ENCODE measurements at regions of chr21 and their contacts with region 1.

Region 1: DNA sequence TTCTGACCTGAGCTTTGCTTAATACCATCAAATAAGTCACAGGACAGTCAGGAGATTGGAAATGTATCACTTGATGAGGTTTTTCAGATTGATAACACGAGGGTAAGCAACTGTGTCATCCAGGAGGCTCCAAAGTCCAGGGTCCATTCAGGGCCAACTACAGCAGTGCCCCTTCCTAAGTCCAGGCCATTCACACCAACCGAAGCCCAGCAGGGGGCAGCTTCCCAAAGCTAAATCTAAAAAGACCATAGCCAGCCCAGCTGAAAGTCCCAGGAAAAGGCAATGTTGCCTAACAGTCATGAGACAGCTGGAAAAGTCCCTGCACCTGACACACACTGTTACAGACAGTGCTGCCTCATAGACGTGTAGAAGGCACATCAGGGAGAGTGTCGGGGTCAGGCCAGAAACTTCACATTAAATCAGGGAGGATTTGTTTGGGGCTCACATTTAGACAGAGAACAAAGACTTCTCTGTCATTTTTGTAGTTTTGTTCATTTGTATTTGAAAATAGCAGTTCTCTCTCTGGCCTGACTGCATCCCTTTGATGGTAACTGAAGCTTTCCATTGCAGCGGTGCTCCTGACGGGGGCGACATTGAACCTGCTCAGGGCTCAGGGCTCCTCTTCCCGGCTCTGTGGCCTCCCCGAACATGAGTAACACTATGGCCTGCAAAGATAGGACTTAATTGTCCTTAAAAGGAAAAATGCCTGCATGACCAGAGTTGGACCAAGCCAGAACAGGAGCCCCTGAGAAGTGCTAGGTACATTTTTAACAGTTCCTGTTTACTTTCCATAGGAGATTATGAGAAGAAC is 200.4 kb downstream of the NRIP1 start:
- DNase-seq: peak; percentile 74
- ATAC-seq: peak; percentile 83 to 95

Region 2: DNA sequence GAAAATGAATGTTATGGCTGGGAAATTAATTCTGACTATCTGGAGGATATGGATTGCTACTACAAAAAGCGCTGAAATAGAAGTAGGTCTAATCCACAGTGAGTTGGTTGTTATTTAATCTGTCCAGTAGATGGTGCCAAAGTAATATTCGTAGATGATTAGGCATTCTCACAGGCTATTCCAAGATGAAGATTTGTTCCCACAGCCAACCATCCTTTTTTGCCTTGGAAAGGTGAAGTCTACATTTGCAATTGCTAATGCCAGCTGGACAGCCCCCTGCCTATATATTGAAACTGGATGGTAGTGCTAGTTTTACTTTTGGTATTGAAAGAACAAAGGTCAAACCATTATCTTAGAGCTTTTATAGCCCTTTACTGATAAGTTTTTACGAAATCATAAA is 604.7 kb before region 1 on chr21:
- intact Hi-C with region 1: loop called in 1 of 2 experiments (anchors 10 kb)
- DNase-seq: no peak
- ATAC-seq: peak; percentile 65 to 72

Region 3: DNA sequence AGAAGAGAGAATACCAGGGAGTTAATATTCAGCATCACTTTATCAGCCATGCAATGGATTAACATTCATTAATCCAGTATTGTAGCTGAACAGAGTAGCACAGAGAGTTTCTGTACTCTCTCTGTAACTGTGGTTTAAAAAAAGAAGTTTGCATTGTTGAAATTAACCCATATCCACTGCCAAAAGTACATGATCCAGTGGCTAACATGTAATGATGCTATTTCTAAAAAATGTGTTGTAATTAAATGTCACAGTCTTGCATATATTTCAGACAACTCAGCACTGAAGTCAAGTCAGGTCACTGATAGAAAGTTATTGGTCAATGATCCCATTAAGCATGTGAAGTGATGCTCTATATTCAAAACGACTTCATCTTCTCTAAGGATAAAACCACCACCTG is 59.1 kb after region 1 on chr21:
- intact Hi-C with region 1: no loop called
- DNase-seq: no peak
- ATAC-seq: peak in 1 of 2 donors; percentile 27

Region 4: DNA sequence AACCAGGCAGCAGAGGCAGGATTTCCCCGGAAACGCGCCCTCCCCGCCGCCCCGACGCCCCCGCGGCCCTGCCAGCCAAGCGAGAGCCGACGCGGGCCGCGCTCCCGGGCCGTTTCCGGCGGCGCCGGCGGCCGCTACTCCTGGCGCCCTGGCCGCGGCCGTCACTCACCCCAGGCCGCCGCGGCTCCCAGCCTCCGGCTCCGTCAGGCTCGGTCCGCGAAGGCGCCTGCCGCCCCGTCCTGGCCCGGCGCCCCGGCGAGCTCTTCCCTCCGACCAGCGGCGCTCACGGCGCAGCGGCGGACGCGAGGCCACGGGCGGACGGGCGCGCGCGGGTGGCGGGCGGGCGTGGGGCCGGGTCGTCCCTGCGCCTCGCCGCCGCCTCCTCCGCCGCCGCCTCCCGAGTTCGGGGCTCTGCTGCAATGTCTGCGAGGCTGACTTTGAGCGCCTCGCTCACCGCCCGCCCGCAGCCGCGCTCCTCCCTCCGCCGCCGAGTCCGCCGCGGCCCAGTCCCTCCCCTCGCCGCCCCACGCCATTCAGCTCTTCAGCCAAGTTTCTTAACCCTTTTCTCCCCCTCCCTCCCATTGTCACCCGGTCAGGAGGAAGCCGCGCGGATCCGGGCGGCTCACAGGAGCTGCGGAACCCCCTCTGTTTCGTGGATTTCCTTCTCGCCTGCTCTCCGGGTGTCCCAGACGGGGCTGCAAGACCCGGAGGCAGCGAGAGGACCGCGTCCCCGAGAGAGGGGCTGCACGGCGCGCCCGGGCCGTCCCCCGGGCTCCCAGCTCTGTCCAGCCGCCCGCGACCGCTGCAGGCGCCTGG is 200.4 kb after region 1 on chr21 and contains the start of gene NRIP1:
- intact Hi-C with region 1: loop called in 1 of 2 experiments (anchors 5 kb)
- DNase-seq: peak; percentile 94
- ATAC-seq: peak; percentile 92 to 94
- total RNA-seq, gene NRIP1: 30.1 to 36.4 TPM

Region 5: DNA sequence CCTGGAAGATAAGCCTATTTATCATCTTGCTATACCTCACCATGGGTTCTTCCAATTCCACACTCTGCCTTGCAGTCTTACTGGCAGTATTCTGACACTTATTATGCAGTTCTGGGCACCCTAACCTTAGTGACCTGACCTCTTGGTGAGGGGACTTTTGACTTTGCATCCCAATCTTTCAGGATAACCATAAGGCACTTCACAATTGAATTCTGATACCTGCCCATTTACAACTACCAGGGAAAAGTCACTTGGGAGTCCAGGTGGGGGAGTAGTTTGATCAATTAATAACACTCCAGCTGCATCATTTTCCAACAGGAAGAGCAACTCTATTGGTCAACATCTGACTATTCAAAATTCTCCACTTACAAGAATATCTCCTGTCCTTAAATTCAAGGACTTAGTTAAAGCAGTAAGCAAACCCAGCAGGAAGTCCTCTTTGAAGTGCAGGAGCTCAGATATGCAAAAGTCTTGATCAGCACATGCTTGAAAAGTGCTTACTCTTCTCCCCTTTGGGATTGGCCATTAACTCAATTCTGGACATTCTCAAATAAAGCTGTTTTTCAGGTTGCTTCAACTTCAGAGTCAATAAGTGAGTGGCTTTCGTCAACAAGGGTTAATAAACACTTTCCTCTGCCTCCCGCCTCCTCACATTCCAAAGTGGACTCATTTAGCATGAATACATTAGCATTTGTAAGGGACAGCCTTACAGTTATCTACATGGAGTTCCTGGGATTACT is 377.8 kb after region 1 on chr21:
- intact Hi-C with region 1: no loop called
- DNase-seq: no peak
- ATAC-seq: no peak

Region 6: DNA sequence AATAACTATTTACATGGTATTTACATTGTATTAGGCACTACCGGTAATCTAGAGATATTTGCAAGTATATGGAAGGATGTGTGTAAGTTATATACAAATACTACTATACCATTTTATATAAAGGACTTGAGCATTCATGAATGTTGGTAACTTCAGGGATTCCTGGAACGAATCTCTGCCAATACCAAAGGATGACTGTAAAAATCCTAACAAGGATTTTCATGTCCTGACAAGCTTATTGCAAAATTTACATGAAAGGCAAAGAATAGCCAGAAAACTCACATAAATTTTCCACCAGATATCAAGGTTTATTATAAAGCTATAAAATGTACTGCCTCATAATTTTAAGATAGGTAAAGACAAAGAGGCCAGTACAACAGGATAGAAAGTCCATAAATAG is 525.6 kb after region 1 on chr21:
- intact Hi-C with region 1: no loop called
- DNase-seq: no peak
- ATAC-seq: no peak

Region 7: GRCh38 chr21:15483138-15483780 is 618.8 kb after region 1 on chr21:
- intact Hi-C with region 1: loop called (anchors 2 to 10 kb)
- DNase-seq: peak; percentile 91
- ATAC-seq: peak; percentile 100

Region 8: DNA sequence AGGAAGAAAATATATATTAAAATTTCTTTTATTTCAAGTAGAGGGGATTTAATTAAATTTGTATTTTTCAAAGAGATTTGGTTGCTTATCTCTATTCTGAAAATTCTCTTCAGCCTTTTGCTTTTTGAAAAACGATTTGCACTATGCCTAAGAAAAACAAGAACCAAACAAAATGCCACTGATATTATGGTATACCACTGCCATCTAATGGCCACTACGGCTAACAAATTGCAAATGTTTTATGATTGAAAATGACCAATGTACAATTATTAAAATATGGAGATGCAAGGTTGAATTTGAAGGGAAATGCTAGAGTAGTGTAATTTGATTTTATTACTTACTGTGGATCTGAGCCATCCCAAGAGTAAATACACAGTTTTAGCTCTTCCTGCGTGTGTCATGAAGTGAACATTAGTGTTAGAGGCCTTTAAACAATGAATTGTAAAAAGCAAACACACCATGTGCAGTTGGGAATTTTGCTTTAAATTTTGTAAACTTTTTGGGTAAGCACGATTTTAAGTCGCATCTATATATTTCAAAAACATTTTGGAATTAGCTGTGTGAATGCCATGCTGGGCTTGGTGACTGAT is 728.0 kb after region 1 on chr21:
- intact Hi-C with region 1: loop called in 1 of 2 experiments (anchors 10 kb)
- DNase-seq: no peak
- ATAC-seq: no peak